ENCODE measurements at regions of chr3 and their contacts with region 1.

Region 1: DNA sequence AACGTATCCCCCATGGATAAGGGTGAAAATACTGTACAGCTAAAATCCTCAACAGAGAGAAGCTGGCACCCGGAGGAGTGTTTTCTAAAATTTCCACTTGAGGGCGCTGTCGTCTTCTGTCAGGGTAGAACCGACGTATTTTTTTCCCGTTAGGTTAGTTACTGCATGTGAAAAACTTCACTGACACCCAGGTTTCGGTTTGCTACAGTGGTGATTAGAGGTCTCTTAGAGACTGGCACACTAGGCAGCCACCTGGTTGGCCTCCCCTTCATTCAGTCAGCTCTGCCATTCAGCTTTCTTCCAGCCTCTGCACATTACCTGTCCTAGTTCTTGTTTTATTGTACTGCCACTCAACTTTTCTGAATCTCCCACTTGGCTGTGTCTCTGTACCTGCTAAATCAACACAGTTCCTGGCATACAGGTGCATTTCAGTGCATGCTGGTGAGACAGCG is 18.4 kb downstream of the CCK start:
- DNase-seq: peak; percentile 72
- ATAC-seq: peak; percentile 67
- H3K4me3 Mint-ChIP-seq: no peak overlapping the region
- H3K27ac Mint-ChIP-seq: no peak overlapping the region
- H3K4me1 Mint-ChIP-seq: peaks cover 4% of the 10 kb centered on the region
- H3K27me3 Mint-ChIP-seq: peaks cover 32% of the 10 kb centered on the region

Region 2: DNA sequence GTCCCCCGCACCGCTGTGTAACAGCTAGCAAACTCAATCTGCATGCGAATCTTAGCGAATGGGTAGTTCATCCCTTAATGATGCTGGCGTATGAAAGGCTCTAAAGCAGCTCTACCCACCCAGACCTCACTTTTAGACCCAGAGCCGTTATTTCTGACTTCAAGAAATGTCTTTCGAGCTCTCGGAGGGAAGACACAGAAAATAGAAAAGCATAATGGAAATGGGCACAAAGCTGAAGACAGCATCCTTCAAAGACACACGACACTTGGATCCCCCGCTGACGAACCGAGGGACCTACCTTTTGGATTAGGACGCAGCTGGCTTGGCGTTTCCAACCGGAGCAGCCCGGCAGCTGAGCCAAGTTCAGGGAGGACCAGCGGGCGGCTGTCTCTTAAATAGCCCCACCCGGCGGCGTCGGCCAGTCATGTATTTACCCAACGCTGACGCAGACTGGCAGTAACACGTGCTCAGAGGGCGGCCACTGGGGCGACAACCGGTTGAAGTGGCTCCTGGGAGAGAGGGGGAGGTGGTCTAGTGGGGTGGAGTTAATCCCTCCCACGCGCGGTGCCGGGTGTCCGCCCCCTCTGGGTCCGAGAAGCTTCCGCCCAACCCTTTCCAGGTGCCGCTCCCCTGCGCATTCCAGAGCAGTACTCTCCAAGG is 16.9 kb after region 1 on chr3:
- CTCF ChIA-PET with region 1: interaction called, 29 read pairs
- POLR2A ChIA-PET with region 1: no interaction called
- DNase-seq: no peak
- ATAC-seq: no peak
- H3K4me3 Mint-ChIP-seq: no peak overlapping the region
- H3K27ac Mint-ChIP-seq: no peak overlapping the region
- H3K4me1 Mint-ChIP-seq: peaks cover 6% of the 10 kb centered on the region
- H3K27me3 Mint-ChIP-seq: peaks cover 70% of the 10 kb centered on the region

Region 3: GRCh38 chr3:42301446-42302175 is 54.0 kb after region 1 on chr3:
- CTCF ChIA-PET with region 1: no interaction called
- POLR2A ChIA-PET with region 1: no interaction called
- DNase-seq: no peak
- ATAC-seq: no peak
- H3K4me3 Mint-ChIP-seq: no peak overlapping the region
- H3K27ac Mint-ChIP-seq: no peak overlapping the region
- H3K4me1 Mint-ChIP-seq: no peaks in the 10 kb centered on the region
- H3K27me3 Mint-ChIP-seq: peaks cover 9% of the 10 kb centered on the region

Region 4: GRCh38 chr3:42421818-42422796 is 174.5 kb after region 1 on chr3:
- CTCF ChIA-PET with region 1: no interaction called
- POLR2A ChIA-PET with region 1: no interaction called
- DNase-seq: no peak
- ATAC-seq: no peak
- H3K4me3 Mint-ChIP-seq: no peak overlapping the region
- H3K27ac Mint-ChIP-seq: no peak overlapping the region
- H3K4me1 Mint-ChIP-seq: no peaks in the 10 kb centered on the region
- H3K27me3 Mint-ChIP-seq: peaks cover 6% of the 10 kb centered on the region

Region 5: GRCh38 chr3:42443819-42444436 is 196.3 kb after region 1 on chr3:
- CTCF ChIA-PET with region 1: interaction called, 77 read pairs
- POLR2A ChIA-PET with region 1: no interaction called
- DNase-seq: peak; percentile 81
- ATAC-seq: peak; percentile 93
- H3K4me3 Mint-ChIP-seq: no peak overlapping the region
- H3K27ac Mint-ChIP-seq: no peak overlapping the region
- H3K4me1 Mint-ChIP-seq: no peaks in the 10 kb centered on the region
- H3K27me3 Mint-ChIP-seq: peaks cover 14% of the 10 kb centered on the region

Region 6: DNA sequence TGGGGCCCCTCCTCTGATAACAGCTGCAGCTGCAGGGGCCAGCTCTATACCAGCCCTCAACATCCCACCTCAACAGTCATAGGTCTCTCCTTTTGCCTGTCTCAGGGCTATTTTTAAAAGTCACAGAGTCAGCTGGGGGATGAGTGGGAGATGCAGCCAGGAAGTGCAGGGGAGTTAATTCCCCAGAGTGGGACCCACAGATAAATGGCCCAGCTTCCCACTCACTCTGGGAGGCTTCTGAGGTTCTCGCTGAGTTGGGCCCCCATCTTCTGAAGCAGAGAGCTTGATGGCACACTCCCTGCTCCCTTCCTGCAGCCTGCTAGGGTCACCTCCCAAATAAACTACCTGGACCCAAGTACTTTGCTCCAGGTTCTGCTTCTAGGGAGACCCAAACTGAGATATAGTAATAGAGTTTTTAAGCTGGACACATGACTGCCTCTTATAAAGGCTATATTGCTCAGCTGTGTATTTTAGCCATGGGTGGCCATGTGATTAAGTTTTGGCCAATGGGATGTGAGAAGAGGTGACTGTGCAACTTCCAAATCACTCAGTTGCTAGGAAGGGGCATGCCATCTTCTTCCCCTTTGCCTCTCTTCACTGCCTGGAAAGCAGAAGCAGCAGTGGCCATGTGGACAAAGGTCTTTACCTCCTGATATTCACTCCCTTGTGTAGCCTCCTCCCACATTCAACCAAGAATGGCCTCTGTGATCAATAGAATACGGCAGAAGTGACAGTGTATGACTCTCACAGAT is 239.4 kb after region 1 on chr3:
- CTCF ChIA-PET with region 1: no interaction called
- POLR2A ChIA-PET with region 1: no interaction called
- DNase-seq: peak; percentile 12
- ATAC-seq: no peak
- H3K4me3 Mint-ChIP-seq: no peak overlapping the region
- H3K27ac Mint-ChIP-seq: no peak overlapping the region
- H3K4me1 Mint-ChIP-seq: no peaks in the 10 kb centered on the region
- H3K27me3 Mint-ChIP-seq: peaks cover 32% of the 10 kb centered on the region

Region 7: GRCh38 chr3:42502429-42503250 is 255.0 kb after region 1 on chr3 and contains the start of gene VIPR1:
- CTCF ChIA-PET with region 1: interaction called, 20 read pairs
- POLR2A ChIA-PET with region 1: no interaction called
- DNase-seq: peak; percentile 91
- ATAC-seq: peak; percentile 97
- H3K4me3 Mint-ChIP-seq: peak within 1 kb of the TSS; percentile 86
- H3K27ac Mint-ChIP-seq: peak within 1 kb of the TSS; percentile 41
- H3K4me1 Mint-ChIP-seq: peaks cover 35% of the 10 kb centered on the region
- H3K27me3 Mint-ChIP-seq: peaks cover 28% of the 10 kb centered on the region
- total RNA-seq, gene VIPR1: 9.1 to 9.5 TPM

Region 8: DNA sequence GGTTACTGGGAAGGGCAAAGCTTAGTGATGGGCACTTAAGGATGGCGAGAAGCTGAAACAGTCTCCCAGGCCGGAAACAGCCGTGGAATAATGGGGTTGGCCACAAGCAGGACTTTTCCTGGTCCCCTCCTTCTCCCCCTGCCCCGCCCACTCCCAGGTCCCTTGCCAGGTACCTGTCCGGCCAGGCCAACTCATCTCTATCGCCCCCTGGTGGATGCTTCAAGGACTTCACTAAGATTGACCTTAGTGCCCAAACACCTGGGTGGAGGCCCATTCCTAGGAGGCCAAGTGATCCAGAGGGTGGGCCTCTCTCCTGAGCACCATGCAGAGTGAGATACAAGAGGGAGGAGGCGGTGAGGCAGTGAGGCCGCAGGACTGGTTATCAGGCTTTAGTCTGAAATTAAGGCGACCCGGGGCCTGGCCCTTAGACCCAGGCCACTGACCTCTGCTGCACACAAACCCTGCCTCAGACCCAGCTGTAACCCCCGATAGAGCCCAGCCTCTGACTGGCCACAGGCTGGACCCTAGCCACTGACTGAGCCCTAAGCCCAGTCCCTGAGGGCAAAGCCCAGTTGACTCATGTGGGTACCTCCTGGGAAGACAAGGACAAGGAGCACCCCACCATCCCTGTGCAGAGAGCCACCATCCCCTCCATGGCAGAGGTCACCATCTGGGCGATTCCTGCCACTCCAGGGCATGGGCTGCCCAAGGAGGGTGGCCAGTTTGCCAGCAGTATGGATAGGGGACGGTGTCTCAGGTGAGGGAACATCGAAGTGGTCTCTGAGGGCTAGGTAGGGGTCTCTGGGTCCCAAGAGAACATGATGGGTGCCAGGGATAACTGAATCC is 292.5 kb after region 1 on chr3:
- CTCF ChIA-PET with region 1: interaction called, 16 read pairs
- POLR2A ChIA-PET with region 1: no interaction called
- DNase-seq: peak; percentile 75
- ATAC-seq: peak; percentile 75
- H3K4me3 Mint-ChIP-seq: no peak overlapping the region
- H3K27ac Mint-ChIP-seq: no peak overlapping the region
- H3K4me1 Mint-ChIP-seq: peaks cover 6% of the 10 kb centered on the region
- H3K27me3 Mint-ChIP-seq: no peaks in the 10 kb centered on the region

Region 9: DNA sequence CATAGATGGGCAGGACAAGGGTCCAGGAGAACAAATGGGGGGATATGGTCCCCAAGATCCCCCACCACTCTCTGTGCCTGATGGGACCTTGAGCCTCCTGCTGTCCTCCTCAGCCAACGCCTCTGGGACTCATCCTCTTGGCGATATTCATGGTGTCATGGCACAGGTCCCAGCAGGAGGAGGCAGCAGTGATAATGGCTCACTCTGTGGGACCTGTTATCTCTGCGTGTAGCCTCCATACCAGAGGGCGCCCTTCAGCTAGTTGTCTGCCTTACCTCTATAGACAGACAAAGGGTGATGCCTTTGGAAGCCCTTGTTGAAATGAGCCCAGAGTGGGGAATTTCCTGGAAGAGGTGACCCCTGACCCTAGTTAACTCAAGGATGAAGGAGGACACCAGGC is 413.3 kb after region 1 on chr3:
- CTCF ChIA-PET with region 1: no interaction called
- POLR2A ChIA-PET with region 1: no interaction called
- DNase-seq: no peak
- ATAC-seq: no peak
- H3K4me3 Mint-ChIP-seq: no peak overlapping the region
- H3K27ac Mint-ChIP-seq: peak overlapping the region; percentile 34
- H3K4me1 Mint-ChIP-seq: no peaks in the 10 kb centered on the region
- H3K27me3 Mint-ChIP-seq: no peaks in the 10 kb centered on the region